ENCODE measurements at regions of chr9 and their contacts with region 1.

Region 1: GRCh38 chr9:111483862-111484571 is at the start of gene ECPAS:
- DNase-seq: peak; percentile 66 to 72 (median 71)
- H3K4me3 ChIP-seq: peak within 1 kb of the TSS; percentile 69 to 89
- H3K4me3 Mint-ChIP-seq: peak within 1 kb of the TSS; percentile 81 to 90 (median 86)
- H3K27ac ChIP-seq: peak within 1 kb of the TSS; percentile 83
- H3K27ac Mint-ChIP-seq: peak within 1 kb of the TSS; percentile 86 to 93 (median 89)
- H3K4me1 ChIP-seq: peaks cover 11% of the 10 kb centered on the region
- H3K4me1 Mint-ChIP-seq: peaks cover 23 to 37% (median 28%) of the 10 kb centered on the region in 4 donors
- H3K27me3 ChIP-seq: no peaks in the 10 kb centered on the region
- H3K27me3 Mint-ChIP-seq: no peaks in the 10 kb centered on the region
- total RNA-seq, gene ECPAS: 77.6 to 80.3 TPM

Region 2: DNA sequence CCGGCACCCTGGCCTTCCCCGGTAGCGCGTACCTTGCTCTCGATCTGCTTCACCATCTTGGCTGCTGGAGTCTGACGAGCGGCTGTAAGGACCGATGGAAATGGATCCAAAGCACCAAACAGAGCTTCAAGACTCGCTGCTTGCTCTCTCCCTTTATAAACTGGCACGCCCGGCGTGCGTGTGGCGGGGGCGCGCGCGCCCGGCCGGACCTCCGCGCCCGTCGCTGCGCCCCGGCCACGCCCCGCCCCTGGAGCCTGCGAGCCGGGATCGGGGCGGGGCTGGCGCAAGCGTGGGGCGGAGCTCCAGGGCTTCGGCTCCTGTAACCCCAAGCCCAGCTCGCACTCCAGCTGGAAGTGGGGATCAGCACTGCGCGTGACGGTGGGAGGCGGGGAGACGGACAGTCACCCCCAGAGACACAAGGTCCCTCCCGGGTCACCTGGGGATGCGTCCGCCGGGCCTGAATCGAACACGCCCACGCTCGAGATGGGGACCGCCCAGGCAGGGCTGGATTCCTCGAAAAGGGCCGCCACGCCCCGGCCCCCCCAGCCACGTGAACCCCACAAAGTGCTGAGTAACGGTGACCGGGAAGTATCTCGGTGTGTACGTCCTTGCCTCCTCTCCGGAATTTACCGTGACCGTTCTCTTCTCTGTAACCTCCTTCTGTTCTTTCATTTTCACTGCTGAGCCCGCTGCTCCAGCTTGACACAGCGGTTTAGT is 1227.5 kb before region 1 on chr9 and contains the start of gene TXN:
- CTCF ChIA-PET with region 1: no interaction called
- POLR2A ChIA-PET with region 1: no interaction called
- intact Hi-C with region 1: loop called (anchors 5 kb)
- DNase-seq: peak; percentile 76 to 81 (median 81)
- H3K4me3 ChIP-seq: peak within 1 kb of the TSS; percentile 64 to 90
- H3K4me3 Mint-ChIP-seq: peak within 1 kb of the TSS; percentile 94 to 99 (median 97)
- H3K27ac ChIP-seq: peak within 1 kb of the TSS; percentile 69
- H3K27ac Mint-ChIP-seq: peak within 1 kb of the TSS; percentile 90 to 99 (median 96)
- H3K4me1 ChIP-seq: peaks cover 40% of the 10 kb centered on the region
- H3K4me1 Mint-ChIP-seq: peaks cover 26 to 47% (median 37%) of the 10 kb centered on the region in 4 donors
- H3K27me3 ChIP-seq: no peaks in the 10 kb centered on the region
- H3K27me3 Mint-ChIP-seq: no peaks in the 10 kb centered on the region
- total RNA-seq, gene TXN: 45.6 to 47.9 TPM

Region 3: DNA sequence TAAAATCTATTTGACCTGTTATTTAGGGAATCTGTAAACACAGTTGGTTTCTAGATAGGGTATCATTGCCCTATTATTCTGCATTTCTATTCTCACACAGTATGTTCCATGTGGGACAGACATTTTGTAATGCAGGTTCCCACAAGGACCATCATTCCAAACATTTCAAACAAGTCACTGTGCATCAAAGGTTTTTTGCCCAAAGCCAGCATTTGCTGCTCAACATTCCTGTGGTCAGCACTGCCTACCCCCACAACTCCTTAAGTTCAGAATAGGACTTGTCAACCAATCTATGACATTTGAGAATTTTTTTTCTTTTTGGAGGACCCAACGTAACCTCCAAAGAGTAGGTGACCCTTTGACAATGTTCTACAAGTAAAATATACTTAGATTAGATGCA is 541.5 kb before region 1 on chr9:
- CTCF ChIA-PET with region 1: no interaction called
- POLR2A ChIA-PET with region 1: no interaction called
- intact Hi-C with region 1: no loop called
- DNase-seq: no peak
- H3K4me3 ChIP-seq: no peak overlapping the region
- H3K4me3 Mint-ChIP-seq: no peak overlapping the region
- H3K27ac ChIP-seq: no peak overlapping the region
- H3K27ac Mint-ChIP-seq: no peak overlapping the region
- H3K4me1 ChIP-seq: no peaks in the 10 kb centered on the region
- H3K4me1 Mint-ChIP-seq: no peaks in the 10 kb centered on the region
- H3K27me3 ChIP-seq: no peaks in the 10 kb centered on the region
- H3K27me3 Mint-ChIP-seq: no peaks in the 10 kb centered on the region

Region 4: GRCh38 chr9:110977259-110977709 is 506.7 kb before region 1 on chr9:
- CTCF ChIA-PET with region 1: no interaction called
- POLR2A ChIA-PET with region 1: no interaction called
- intact Hi-C with region 1: no loop called
- DNase-seq: no peak
- H3K4me3 ChIP-seq: no peak overlapping the region
- H3K4me3 Mint-ChIP-seq: no peak overlapping the region
- H3K27ac ChIP-seq: no peak overlapping the region
- H3K27ac Mint-ChIP-seq: no peak overlapping the region
- H3K4me1 ChIP-seq: no peaks in the 10 kb centered on the region
- H3K4me1 Mint-ChIP-seq: no peaks in the 10 kb centered on the region
- H3K27me3 ChIP-seq: no peaks in the 10 kb centered on the region
- H3K27me3 Mint-ChIP-seq: no peaks in the 10 kb centered on the region

Region 5: GRCh38 chr9:111298731-111299598 is 185.1 kb before region 1 on chr9:
- CTCF ChIA-PET with region 1: no interaction called
- POLR2A ChIA-PET with region 1: no interaction called
- intact Hi-C with region 1: no loop called
- DNase-seq: peak in 4 of 5 donors; percentile 20 to 31 (median 30)
- H3K4me3 ChIP-seq: no peak overlapping the region
- H3K4me3 Mint-ChIP-seq: no peak overlapping the region
- H3K27ac ChIP-seq: no peak overlapping the region
- H3K27ac Mint-ChIP-seq: no peak overlapping the region
- H3K4me1 ChIP-seq: no peaks in the 10 kb centered on the region
- H3K4me1 Mint-ChIP-seq: peaks cover 0 to 2% (median 0%) of the 10 kb centered on the region in 4 donors
- H3K27me3 ChIP-seq: no peaks in the 10 kb centered on the region
- H3K27me3 Mint-ChIP-seq: peaks cover 3 to 4% of the 10 kb centered on the region in 2 donors

Region 6: DNA sequence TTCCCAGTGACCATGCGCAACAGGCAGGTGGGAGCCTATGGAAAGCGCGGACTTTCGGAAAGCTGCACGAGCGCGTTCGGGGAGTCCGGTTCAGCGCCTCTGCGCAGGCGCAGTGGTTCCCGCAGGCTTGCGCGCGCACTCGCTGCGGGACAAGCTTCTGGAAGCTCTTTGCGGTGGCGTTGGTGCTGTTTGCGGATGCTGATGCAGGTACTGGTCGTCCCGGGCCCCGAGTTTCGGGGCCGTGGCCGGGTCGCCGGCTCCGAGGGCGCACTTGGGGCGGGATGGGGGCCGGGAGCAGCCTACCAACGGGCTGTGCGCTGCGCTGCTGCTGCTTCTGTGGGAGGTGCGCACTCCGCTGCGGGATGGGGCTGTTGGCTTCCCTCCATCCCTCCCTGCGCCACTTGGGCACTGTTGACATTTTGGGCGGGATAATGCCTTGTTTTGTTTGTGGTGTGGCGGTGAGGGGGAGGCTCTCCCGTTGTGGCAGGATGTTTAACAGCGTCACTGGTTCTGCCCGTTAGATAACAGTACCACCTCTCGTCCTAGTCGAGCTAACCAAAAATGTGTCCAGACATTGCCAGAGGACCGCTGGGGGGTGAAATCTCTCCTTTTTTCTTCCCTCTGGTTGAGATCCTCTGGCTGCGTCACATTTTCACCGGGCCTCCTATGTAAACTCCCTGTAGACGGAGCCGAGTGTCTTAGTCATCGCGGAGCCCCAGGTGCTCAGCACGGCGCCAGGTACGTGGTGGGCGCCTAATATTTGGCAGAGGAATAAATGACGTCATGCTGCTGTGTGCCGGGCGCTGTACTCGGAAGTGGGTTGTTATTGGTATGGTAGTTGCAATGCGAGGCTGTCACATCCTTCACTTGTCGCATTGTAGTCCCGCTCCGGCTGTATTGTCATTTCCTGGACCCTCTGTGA is 41.3 kb after region 1 on chr9 and contains the start of gene ZNF483:
- CTCF ChIA-PET with region 1: no interaction called
- POLR2A ChIA-PET with region 1: interaction called, 22 read pairs
- intact Hi-C with region 1: loop called (anchors 1 kb)
- DNase-seq: peak; percentile 71 to 95 (median 79)
- H3K4me3 ChIP-seq: peak within 1 kb of the TSS; percentile 54 to 87
- H3K4me3 Mint-ChIP-seq: peak within 1 kb of the TSS; percentile 95 to 99 (median 96)
- H3K27ac ChIP-seq: peak within 1 kb of the TSS; percentile 74
- H3K27ac Mint-ChIP-seq: peak within 1 kb of the TSS; percentile 95 to 100 (median 98)
- H3K4me1 ChIP-seq: peaks cover 9% of the 10 kb centered on the region
- H3K4me1 Mint-ChIP-seq: peaks cover 21 to 27% (median 21%) of the 10 kb centered on the region in 4 donors
- H3K27me3 ChIP-seq: no peaks in the 10 kb centered on the region
- H3K27me3 Mint-ChIP-seq: peaks cover 0 to 6% of the 10 kb centered on the region in 2 donors
- total RNA-seq, gene ZNF483: 17.6 to 22.9 TPM

Region 7: DNA sequence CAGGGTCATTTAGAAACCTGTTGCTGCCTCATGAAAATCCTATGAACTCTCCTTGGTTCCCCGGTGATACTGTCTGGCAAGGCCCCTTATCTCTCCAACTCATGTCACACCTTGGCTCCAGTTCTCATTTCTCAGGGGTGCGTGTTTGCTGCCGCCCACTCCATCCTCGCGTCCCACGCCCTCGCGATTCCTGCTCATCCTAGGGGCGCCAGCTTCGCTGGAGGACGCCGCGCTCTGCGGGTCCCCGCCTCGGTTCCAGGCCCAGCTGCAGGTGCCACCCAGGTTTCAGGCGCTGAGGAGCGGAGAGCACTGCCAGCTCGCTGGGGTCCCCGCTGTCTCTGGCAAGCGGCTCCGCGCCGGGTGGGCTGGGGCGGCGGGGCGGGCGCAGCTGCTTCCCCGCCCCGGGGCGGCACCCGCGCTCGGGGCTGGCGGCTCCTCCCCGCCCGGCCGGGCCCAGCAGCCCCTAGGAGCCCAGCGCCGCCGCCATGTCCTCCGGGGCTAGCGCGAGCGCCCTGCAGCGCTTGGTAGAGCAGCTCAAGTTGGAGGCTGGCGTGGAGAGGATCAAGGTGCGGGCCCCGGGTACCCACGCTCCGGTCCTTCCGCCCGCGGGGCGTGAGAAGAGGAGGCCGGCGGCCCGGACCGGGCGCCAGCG is 177.3 kb after region 1 on chr9 and contains the start of gene GNG10:
- CTCF ChIA-PET with region 1: no interaction called
- POLR2A ChIA-PET with region 1: interaction called, 3 read pairs
- intact Hi-C with region 1: loop called (anchors 2 kb)
- DNase-seq: peak; percentile 66 to 73 (median 71)
- H3K4me3 ChIP-seq: peak within 1 kb of the TSS; percentile 76 to 77
- H3K4me3 Mint-ChIP-seq: peak within 1 kb of the TSS; percentile 91 to 97 (median 94)
- H3K27ac ChIP-seq: peak within 1 kb of the TSS; percentile 65
- H3K27ac Mint-ChIP-seq: peak within 1 kb of the TSS; percentile 68 to 98 (median 94)
- H3K4me1 ChIP-seq: peaks cover 36% of the 10 kb centered on the region
- H3K4me1 Mint-ChIP-seq: peaks cover 21 to 44% (median 31%) of the 10 kb centered on the region in 4 donors
- H3K27me3 ChIP-seq: no peaks in the 10 kb centered on the region
- H3K27me3 Mint-ChIP-seq: no peaks in the 10 kb centered on the region
- total RNA-seq, gene GNG10: 9.8 to 12.4 TPM

Region 8: DNA sequence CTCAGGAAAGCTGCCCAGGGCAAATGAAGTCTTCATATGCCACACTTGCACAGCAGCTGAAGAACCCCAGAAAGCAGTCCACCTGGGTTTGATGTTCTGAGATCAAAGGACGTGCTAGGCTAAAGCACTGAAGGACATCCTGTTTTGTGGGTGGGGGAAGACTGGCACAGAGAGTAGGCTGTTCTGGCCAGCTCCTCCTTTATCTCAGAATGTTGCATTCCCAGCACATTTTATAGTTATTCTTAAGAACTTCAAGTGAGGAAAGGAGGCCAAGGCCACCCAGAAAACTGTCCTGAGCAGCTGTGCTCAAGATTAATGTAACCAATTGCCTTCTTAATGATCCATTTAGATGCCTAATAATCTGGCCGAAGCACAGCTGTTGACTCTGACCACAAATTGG is 299.8 kb after region 1 on chr9:
- CTCF ChIA-PET with region 1: no interaction called
- POLR2A ChIA-PET with region 1: no interaction called
- intact Hi-C with region 1: no loop called
- DNase-seq: no peak
- H3K4me3 ChIP-seq: no peak overlapping the region
- H3K4me3 Mint-ChIP-seq: no peak overlapping the region
- H3K27ac ChIP-seq: no peak overlapping the region
- H3K27ac Mint-ChIP-seq: no peak overlapping the region
- H3K4me1 ChIP-seq: no peaks in the 10 kb centered on the region
- H3K4me1 Mint-ChIP-seq: peaks cover 0 to 6% (median 2%) of the 10 kb centered on the region in 4 donors
- H3K27me3 ChIP-seq: no peaks in the 10 kb centered on the region
- H3K27me3 Mint-ChIP-seq: no peaks in the 10 kb centered on the region

Region 9: DNA sequence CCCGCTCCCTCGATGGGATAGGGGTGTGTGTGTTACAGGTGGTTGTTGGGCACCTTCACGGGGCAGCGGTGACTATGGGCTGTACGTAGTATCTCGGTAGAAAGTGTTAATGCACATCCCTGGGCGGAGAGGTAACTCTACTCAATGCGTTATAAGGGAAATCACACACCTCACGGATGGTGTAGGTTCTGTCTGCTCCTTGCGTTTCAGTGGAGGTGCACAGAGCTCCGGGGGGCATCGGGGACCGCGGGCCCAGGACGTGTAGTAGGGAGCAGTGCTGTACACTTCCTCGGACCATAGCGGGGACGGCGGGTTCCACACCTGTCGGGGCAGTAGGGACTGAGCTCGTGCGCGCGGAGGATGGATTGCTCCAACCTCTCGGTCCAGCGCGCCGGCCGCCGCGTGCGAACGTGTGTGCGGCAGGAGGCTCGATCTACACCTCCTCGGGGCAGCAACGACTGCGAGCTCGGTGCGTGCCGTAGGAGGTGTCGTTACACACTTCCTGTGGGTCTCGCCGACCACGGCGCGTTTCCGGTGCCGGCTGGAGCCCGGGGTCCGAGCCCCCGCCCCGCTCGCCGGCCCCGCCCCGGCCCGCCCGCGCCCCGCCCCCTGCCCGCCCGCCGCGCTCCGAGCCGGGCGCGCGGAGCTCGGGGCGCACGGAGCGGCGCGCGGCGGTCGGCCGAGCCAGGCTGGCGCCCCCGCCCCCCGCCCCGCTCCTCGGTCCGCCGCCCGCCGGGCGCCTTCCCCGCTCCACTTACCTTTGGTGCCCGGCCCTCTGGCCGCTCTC is 1002.4 kb after region 1 on chr9 and contains the start of gene KIAA1958:
- CTCF ChIA-PET with region 1: no interaction called
- POLR2A ChIA-PET with region 1: no interaction called
- intact Hi-C with region 1: loop called (anchors 5 kb)
- DNase-seq: peak; percentile 65 to 76 (median 72)
- H3K4me3 ChIP-seq: peak within 1 kb of the TSS; percentile 77 to 78
- H3K4me3 Mint-ChIP-seq: peak within 1 kb of the TSS; percentile 93 to 99 (median 96)
- H3K27ac ChIP-seq: peak within 1 kb of the TSS; percentile 42
- H3K27ac Mint-ChIP-seq: peak within 1 kb of the TSS; percentile 79 to 95 (median 92)
- H3K4me1 ChIP-seq: peaks cover 8% of the 10 kb centered on the region
- H3K4me1 Mint-ChIP-seq: peaks cover 9 to 28% (median 16%) of the 10 kb centered on the region in 4 donors
- H3K27me3 ChIP-seq: no peaks in the 10 kb centered on the region
- H3K27me3 Mint-ChIP-seq: no peaks in the 10 kb centered on the region
- total RNA-seq, gene KIAA1958: 4.3 to 5.1 TPM

Measured in CD4-positive, alpha-beta memory T cell (primary cell).